CD4-positive, alpha-beta T cell (primary cell): ENCODE measurements at regions of chr5 and their contacts with region 1.

Region 1: DNA sequence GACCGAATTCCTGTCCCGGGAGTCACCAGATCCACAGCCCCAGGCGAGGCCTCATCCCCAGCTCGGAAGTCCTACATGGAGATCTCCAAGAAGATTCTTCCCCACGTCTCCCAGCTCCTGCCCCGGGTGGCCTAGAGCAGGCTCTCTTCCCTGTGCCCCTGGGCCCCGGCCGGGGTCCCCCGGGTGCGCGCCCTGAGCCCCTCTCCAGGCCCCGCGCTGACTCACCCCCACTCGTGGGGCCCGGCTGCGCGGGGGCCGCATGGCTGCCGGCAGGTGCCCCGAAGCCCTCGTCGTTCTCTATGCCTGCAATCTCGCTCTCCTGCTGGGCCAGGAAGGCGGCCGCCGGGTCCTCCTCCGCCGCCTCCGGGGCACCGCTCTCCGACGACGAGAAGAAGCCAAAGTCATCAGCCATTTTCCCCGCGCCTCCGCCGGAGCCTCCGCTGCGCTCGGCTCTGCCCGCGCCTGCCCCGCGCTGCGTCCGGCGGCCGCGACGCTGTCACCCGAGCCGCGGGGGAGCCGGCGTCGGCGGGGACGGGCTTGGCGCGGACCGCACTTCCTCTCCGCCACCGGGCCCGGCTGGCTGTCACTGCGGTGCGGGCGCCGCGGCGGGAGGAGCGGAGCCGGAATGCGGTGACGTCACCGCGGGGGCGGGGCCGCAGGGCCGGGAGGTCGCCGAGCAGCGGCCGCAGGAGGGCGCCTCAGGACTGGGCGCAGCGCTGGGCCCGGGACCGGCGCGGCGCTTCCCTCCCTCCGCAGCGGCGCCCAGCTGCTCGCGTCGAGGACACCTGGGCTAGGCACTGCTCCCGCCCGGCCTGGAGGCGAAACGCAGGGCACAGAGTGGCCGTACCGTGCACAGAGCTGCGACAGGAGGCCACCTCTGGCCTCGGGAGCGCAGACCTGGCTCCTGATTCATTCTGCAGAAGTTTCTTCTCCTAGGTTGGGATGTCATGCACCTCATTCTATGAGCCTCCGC is at the start of gene CLTB:
- DNase-seq: peak; percentile 79 to 98 (median 92)
- ATAC-seq: peak; percentile 90
- H3K4me3 ChIP-seq: peak within 1 kb of the TSS; percentile 65
- H3K4me3 Mint-ChIP-seq: peak within 1 kb of the TSS; percentile 89
- H3K27ac ChIP-seq: peak within 1 kb of the TSS; percentile 18 to 61
- H3K27ac Mint-ChIP-seq: peak within 1 kb of the TSS; percentile 86
- H3K4me1 ChIP-seq: peaks cover 37% of the 10 kb centered on the region
- H3K4me1 Mint-ChIP-seq: peaks cover 42% of the 10 kb centered on the region
- H3K27me3 ChIP-seq: no peaks in the 10 kb centered on the region
- H3K27me3 Mint-ChIP-seq: no peaks in the 10 kb centered on the region
- CTCF ChIP-seq: peak; percentile 41
- total RNA-seq, gene CLTB: 69.5 to 73.2 TPM

Region 2: GRCh38 chr5:175729829-175730277 is 686.4 kb before region 1 on chr5:
- CTCF ChIA-PET with region 1: no interaction called
- POLR2A ChIA-PET with region 1: no interaction called
- intact Hi-C with region 1: loop called in 1 of 2 experiments (anchors 5 kb)
- DNase-seq: peak; percentile 85 to 96 (median 92)
- ATAC-seq: peak; percentile 98
- H3K4me3 ChIP-seq: no peak overlapping the region
- H3K4me3 Mint-ChIP-seq: no peak overlapping the region
- H3K27ac ChIP-seq: no peak overlapping the region
- H3K27ac Mint-ChIP-seq: no peak overlapping the region
- H3K4me1 ChIP-seq: peaks cover 8% of the 10 kb centered on the region
- H3K4me1 Mint-ChIP-seq: peaks cover 7% of the 10 kb centered on the region
- H3K27me3 ChIP-seq: peaks cover 10% of the 10 kb centered on the region in 2 experiments
- H3K27me3 Mint-ChIP-seq: peaks cover 31% of the 10 kb centered on the region
- CTCF ChIP-seq: peak; percentile 93

Region 3: GRCh38 chr5:176388444-176389134 is 27.6 kb before region 1 on chr5 and contains the starts of genes HIGD2A and NOP16:
- CTCF ChIA-PET with region 1: no interaction called
- POLR2A ChIA-PET with region 1: interaction called, 7 read pairs
- intact Hi-C with region 1: loop called in 1 of 2 experiments (anchors 1 kb)
- DNase-seq: peak; percentile 96 to 100 (median 99)
- ATAC-seq: peak; percentile 87
- H3K4me3 ChIP-seq: peak within 1 kb of the TSS; percentile 79
- H3K4me3 Mint-ChIP-seq: peak within 1 kb of the TSS; percentile 98
- H3K27ac ChIP-seq: peak within 1 kb of the TSS; percentile 87 to 95
- H3K27ac Mint-ChIP-seq: peak within 1 kb of the TSS; percentile 97
- H3K4me1 ChIP-seq: peaks cover 33% of the 10 kb centered on the region
- H3K4me1 Mint-ChIP-seq: peaks cover 38% of the 10 kb centered on the region
- H3K27me3 ChIP-seq: no peaks in the 10 kb centered on the region
- H3K27me3 Mint-ChIP-seq: no peaks in the 10 kb centered on the region
- CTCF ChIP-seq: no peak
- total RNA-seq, gene HIGD2A: 98.2 to 104 TPM
- total RNA-seq, gene NOP16: 12.0 to 14.5 TPM

Region 4: GRCh38 chr5:176515396-176515795 is 99.2 kb after region 1 on chr5:
- CTCF ChIA-PET with region 1: no interaction called
- POLR2A ChIA-PET with region 1: no interaction called
- intact Hi-C with region 1: no loop called
- DNase-seq: peak in 1 of 14 experiments; percentile 25
- ATAC-seq: no peak
- H3K4me3 ChIP-seq: no peak overlapping the region
- H3K4me3 Mint-ChIP-seq: no peak overlapping the region
- H3K27ac ChIP-seq: no peak overlapping the region
- H3K27ac Mint-ChIP-seq: no peak overlapping the region
- H3K4me1 ChIP-seq: peaks cover 14% of the 10 kb centered on the region
- H3K4me1 Mint-ChIP-seq: peaks cover 13% of the 10 kb centered on the region
- H3K27me3 ChIP-seq: no peaks in the 10 kb centered on the region
- H3K27me3 Mint-ChIP-seq: no peaks in the 10 kb centered on the region
- CTCF ChIP-seq: no peak

Region 5: DNA sequence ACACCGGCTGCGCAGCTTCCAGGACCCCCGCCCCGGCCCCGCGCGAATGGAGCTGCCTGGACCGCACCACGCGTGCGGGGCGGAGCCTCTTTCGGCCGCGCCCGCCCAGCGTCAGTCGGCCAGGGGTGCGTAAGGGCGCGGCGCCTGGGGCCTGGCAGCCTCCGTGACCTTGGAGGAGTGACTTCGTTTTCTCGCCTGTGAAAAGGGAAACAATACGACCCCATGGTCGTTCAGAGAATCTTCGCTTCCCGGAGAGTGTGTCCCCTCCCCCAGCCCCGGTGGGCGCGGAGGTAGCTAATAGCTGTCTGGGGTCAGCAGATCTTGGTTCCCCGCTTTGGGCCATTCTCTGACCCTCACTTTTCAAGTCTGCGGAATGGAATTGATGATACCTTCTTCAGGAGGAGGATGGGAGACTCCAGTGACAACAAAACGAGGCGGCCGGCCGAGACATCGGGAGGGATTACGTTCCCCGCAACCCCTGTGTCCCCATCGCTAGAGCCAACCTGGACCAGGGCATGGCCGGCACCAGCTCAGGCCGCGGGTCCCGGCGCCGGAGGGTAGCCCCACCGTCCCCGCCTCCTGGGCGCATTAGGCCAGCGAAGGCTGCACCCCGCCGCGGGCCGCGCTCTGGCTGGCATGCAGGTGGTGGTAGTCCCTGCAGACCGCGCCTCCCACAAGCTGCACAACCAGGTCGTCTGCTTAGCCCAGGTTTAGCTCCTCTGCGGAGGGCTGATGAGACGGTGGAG is 127.4 kb after region 1 on chr5:
- CTCF ChIA-PET with region 1: interaction called, 37 read pairs
- POLR2A ChIA-PET with region 1: interaction called, 40 read pairs
- intact Hi-C with region 1: loop called (anchors 2 to 5 kb)
- DNase-seq: peak; percentile 53 to 89 (median 70)
- ATAC-seq: peak; percentile 64
- H3K4me3 ChIP-seq: peak overlapping the region; percentile 76
- H3K4me3 Mint-ChIP-seq: peak overlapping the region; percentile 89
- H3K27ac ChIP-seq: peak overlapping the region; percentile 84 to 87
- H3K27ac Mint-ChIP-seq: peak overlapping the region; percentile 93
- H3K4me1 ChIP-seq: peaks cover 77% of the 10 kb centered on the region
- H3K4me1 Mint-ChIP-seq: peaks cover 80% of the 10 kb centered on the region
- H3K27me3 ChIP-seq: no peaks in the 10 kb centered on the region
- H3K27me3 Mint-ChIP-seq: no peaks in the 10 kb centered on the region
- CTCF ChIP-seq: no peak

Region 6: DNA sequence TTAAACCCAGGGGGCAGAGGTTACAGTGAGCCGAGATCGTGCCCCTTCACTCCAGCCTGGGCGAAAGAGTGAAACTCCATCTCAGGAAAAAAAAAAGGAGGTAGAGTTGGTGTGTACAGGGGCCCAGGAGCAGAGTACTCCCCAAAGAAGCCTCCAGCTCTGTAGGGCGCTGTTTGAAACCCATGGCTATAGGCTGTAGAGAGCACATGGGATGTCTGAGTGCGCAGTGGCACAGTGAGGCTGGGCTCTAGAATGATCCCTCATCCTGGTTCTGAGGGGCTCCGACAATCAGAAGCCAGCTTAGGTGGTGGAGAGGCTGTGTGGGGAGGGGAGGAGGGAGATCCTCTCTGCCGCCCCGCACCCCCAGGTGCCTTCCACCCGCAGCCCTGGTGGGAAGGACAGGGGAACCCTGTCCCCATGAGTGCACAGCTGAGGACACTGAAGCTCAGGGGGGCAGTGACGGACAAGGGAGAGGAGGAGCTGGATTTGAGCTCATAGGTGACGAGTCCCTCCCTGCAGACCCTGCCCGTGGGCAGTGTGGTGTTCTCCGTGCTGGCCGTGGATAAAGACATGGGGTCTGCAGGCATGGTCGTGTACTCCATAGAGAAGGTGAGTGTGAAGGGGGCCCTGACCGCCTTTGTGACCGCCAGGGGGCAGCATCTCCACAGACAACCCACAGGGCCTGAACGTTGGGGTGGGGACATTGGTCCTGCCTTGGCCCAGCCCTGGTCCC is 157.5 kb after region 1 on chr5:
- CTCF ChIA-PET with region 1: interaction called, 6 read pairs
- POLR2A ChIA-PET with region 1: interaction called, 3 read pairs
- intact Hi-C with region 1: loop called (anchors 1 kb)
- DNase-seq: peak; percentile 60 to 89 (median 76)
- ATAC-seq: peak; percentile 79
- H3K4me3 ChIP-seq: no peak overlapping the region
- H3K4me3 Mint-ChIP-seq: no peak overlapping the region
- H3K27ac ChIP-seq: no peak overlapping the region
- H3K27ac Mint-ChIP-seq: no peak overlapping the region
- H3K4me1 ChIP-seq: peaks cover 13% of the 10 kb centered on the region
- H3K4me1 Mint-ChIP-seq: no peaks in the 10 kb centered on the region
- H3K27me3 ChIP-seq: no peaks in the 10 kb centered on the region
- H3K27me3 Mint-ChIP-seq: peaks cover 4% of the 10 kb centered on the region
- CTCF ChIP-seq: peak; percentile 79

Region 7: GRCh38 chr5:176660860-176661641 is 244.8 kb after region 1 on chr5:
- CTCF ChIA-PET with region 1: interaction called, 4 read pairs
- POLR2A ChIA-PET with region 1: interaction called, 3 read pairs
- intact Hi-C with region 1: loop called in 1 of 2 experiments (anchors 5 kb)
- DNase-seq: peak; percentile 58 to 91 (median 73)
- ATAC-seq: peak; percentile 76
- H3K4me3 ChIP-seq: no peak overlapping the region
- H3K4me3 Mint-ChIP-seq: peak overlapping the region; percentile 83
- H3K27ac ChIP-seq: no peak overlapping the region
- H3K27ac Mint-ChIP-seq: peak overlapping the region; percentile 52
- H3K4me1 ChIP-seq: peaks cover 35% of the 10 kb centered on the region
- H3K4me1 Mint-ChIP-seq: peaks cover 33% of the 10 kb centered on the region
- H3K27me3 ChIP-seq: peaks cover 0 to 2% of the 10 kb centered on the region in 2 experiments
- H3K27me3 Mint-ChIP-seq: peaks cover 22% of the 10 kb centered on the region
- CTCF ChIP-seq: peak; percentile 97

Region 8: DNA sequence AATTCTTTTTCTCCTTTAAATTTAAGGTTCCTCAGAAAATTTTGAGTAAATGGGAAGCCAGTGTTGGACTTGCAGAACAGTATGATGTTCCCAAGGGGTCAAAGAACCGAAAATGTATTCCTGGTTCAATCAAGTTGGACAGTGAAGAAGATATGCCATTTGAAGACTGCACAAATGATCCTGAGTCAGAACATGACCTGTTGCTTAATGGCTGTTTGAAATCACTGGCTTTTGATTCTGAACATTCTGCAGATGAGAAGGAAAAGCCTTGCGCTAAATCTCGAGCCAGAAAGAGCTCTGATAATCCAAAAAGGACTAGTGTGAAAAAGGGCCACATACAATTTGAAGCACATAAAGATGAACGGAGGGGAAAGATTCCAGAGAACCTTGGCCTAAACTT is 793.4 kb after region 1 on chr5:
- CTCF ChIA-PET with region 1: no interaction called
- POLR2A ChIA-PET with region 1: no interaction called
- intact Hi-C with region 1: no loop called
- DNase-seq: no peak
- ATAC-seq: no peak
- H3K4me3 ChIP-seq: no peak overlapping the region
- H3K4me3 Mint-ChIP-seq: no peak overlapping the region
- H3K27ac ChIP-seq: no peak overlapping the region
- H3K27ac Mint-ChIP-seq: no peak overlapping the region
- H3K4me1 ChIP-seq: no peaks in the 10 kb centered on the region
- H3K4me1 Mint-ChIP-seq: peaks cover 3% of the 10 kb centered on the region
- H3K27me3 ChIP-seq: no peaks in the 10 kb centered on the region
- H3K27me3 Mint-ChIP-seq: no peaks in the 10 kb centered on the region
- CTCF ChIP-seq: no peak